Endothelial cell of umbilical vein (primary cell): ENCODE measurements at regions of chr17 and their contacts with region 1.

Region 1: GRCh38 chr17:46940621-46941404 is 17.9 kb downstream of the GOSR2 start:
- DNase-seq: peak; percentile 78
- H3K4me3 ChIP-seq: no peak overlapping the region
- H3K27ac ChIP-seq: no peak overlapping the region
- H3K4me1 ChIP-seq: peaks cover 11% of the 10 kb centered on the region
- H3K27me3 ChIP-seq: no peaks in the 10 kb centered on the region
- CTCF ChIP-seq: peak; percentile 90 to 95
- POLR2A ChIP-seq: peak; percentile 40

Region 2: DNA sequence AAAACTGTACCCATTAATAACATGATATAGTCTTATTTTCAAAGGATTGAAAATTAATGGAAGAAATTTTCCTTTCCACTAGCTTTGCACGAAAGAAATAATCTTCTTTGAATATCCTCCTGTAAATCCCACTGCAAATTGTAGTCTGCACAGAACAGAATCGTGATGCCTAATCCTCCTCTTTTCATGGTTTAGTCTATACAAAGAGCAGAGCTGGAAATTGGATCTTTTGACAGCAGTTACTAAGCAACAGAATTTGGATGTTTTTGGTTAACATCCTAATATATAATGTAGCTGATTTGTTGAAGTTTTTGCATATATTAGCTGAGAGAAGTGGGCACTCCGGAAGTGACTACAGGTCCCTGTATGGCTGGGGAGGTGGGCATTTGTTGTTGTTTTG is 220.9 kb before region 1 on chr17:
- CTCF ChIA-PET with region 1: no interaction called
- POLR2A ChIA-PET with region 1: no interaction called
- dilution Hi-C with region 1: no loop called
- intact Hi-C with region 1: no loop called
- DNase-seq: no peak
- H3K4me3 ChIP-seq: no peak overlapping the region
- H3K27ac ChIP-seq: no peak overlapping the region
- H3K4me1 ChIP-seq: peaks cover 10% of the 10 kb centered on the region
- H3K27me3 ChIP-seq: no peaks in the 10 kb centered on the region
- CTCF ChIP-seq: no peak
- POLR2A ChIP-seq: no peak

Region 3: GRCh38 chr17:46758623-46759022 is 182.2 kb before region 1 on chr17:
- CTCF ChIA-PET with region 1: no interaction called
- POLR2A ChIA-PET with region 1: no interaction called
- dilution Hi-C with region 1: no loop called
- intact Hi-C with region 1: no loop called
- DNase-seq: no peak
- H3K4me3 ChIP-seq: no peak overlapping the region
- H3K27ac ChIP-seq: no peak overlapping the region
- H3K4me1 ChIP-seq: no peaks in the 10 kb centered on the region
- H3K27me3 ChIP-seq: no peaks in the 10 kb centered on the region
- CTCF ChIP-seq: no peak
- POLR2A ChIP-seq: no peak

Region 4: DNA sequence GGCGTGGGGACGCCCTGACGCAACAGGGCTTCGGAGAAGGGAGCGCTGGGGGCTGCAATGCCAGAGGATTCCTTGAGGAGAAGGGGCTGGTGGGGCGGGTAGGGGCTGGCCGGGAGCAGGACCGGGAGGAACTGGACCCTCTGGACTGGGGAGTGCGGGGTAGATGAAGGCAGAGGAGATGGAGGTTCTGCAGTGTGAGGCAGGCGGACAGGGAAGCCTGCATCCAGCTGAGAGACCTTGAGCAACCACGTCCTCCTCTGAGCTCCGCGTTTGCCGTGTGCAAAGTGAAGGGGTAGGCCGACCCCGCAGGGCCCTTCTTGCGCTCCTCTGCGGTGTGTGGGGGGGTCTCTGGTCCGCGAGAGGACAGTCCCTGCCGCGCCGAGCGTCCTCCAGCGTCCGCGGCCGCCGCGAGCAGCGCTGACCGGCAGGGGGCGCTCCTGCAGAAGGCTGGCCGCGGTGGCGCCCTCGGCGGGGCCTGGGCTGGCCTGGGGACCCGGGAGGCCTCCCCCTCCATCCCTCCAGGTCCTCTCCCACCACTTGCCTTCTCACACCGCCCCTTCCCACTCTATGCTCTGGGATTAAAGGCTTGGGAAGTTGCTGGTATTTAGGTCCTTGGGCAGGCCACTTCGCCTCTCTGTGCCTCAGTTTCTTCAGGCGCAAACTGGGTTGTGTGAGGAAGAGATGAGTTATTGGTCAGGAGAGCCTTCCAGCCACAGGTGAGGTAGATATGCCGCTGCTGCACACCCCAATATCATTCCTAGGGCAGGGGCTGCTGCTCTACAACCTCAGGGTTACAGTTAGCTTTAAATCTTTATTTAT is 99.0 kb before region 1 on chr17:
- CTCF ChIA-PET with region 1: interaction called, 57 read pairs
- POLR2A ChIA-PET with region 1: no interaction called
- dilution Hi-C with region 1: no loop called
- intact Hi-C with region 1: loop called (anchors 1 kb)
- DNase-seq: no peak
- H3K4me3 ChIP-seq: no peak overlapping the region
- H3K27ac ChIP-seq: no peak overlapping the region
- H3K4me1 ChIP-seq: no peaks in the 10 kb centered on the region
- H3K27me3 ChIP-seq: peaks cover 6 to 9% of the 10 kb centered on the region in 2 experiments
- CTCF ChIP-seq: peak; percentile 74 to 93
- POLR2A ChIP-seq: no peak

Region 5: GRCh38 chr17:46917516-46917915 is 23.3 kb before region 1 on chr17:
- CTCF ChIA-PET with region 1: interaction called, 15 read pairs
- POLR2A ChIA-PET with region 1: no interaction called
- dilution Hi-C with region 1: no loop called
- intact Hi-C with region 1: no loop called
- DNase-seq: no peak
- H3K4me3 ChIP-seq: no peak overlapping the region
- H3K27ac ChIP-seq: no peak overlapping the region
- H3K4me1 ChIP-seq: no peaks in the 10 kb centered on the region
- H3K27me3 ChIP-seq: no peaks in the 10 kb centered on the region
- CTCF ChIP-seq: no peak
- POLR2A ChIP-seq: no peak

Region 6: GRCh38 chr17:46962374-46962790 is 21.6 kb after region 1 on chr17:
- CTCF ChIA-PET with region 1: interaction called, 13 read pairs
- POLR2A ChIA-PET with region 1: no interaction called
- dilution Hi-C with region 1: no loop called
- intact Hi-C with region 1: no loop called
- DNase-seq: peak; percentile 52
- H3K4me3 ChIP-seq: no peak overlapping the region
- H3K27ac ChIP-seq: no peak overlapping the region
- H3K4me1 ChIP-seq: no peaks in the 10 kb centered on the region
- H3K27me3 ChIP-seq: peaks cover 2 to 16% of the 10 kb centered on the region in 2 experiments
- CTCF ChIP-seq: no peak
- POLR2A ChIP-seq: no peak

Region 7: DNA sequence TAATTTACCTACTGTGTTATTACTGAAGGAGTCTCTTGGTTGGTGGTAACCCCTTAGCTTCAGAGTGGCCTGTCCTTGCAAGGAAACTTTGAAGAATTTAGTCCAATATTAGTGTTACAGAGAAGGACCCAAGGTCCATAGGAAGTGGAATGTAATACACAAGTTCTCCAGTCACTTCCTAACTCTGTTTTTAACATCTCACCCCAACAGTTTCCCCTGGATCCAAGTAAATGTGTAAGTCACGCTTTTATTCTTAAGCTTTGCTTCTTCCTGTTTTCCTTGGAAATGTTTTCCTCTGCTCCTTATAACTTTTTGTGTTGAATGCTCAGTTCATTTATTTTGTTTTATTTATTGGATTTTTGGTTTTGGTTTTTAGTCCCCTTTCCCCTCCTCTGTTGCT is 64.1 kb after region 1 on chr17:
- CTCF ChIA-PET with region 1: interaction called, 80 read pairs
- POLR2A ChIA-PET with region 1: no interaction called
- dilution Hi-C with region 1: no loop called
- intact Hi-C with region 1: loop called (anchors 1 kb)
- DNase-seq: peak; percentile 75
- H3K4me3 ChIP-seq: peak overlapping the region in 1 of 3 experiments; percentile 33
- H3K27ac ChIP-seq: peak overlapping the region; percentile 2
- H3K4me1 ChIP-seq: peaks cover 15% of the 10 kb centered on the region
- H3K27me3 ChIP-seq: no peaks in the 10 kb centered on the region
- CTCF ChIP-seq: no peak
- POLR2A ChIP-seq: no peak